ENCODE measurements at regions of chr17 and their contacts with region 1.

Region 1: GRCh38 chr17:62109378-62109902 is 44.4 kb upstream of the MED13 start:
- DNase-seq: peak; percentile 86
- H3K4me3 ChIP-seq: no peak overlapping the region
- H3K27ac ChIP-seq: no peak overlapping the region
- H3K4me1 ChIP-seq: peaks cover 6% of the 10 kb centered on the region
- H3K27me3 ChIP-seq: no peaks in the 10 kb centered on the region
- CTCF ChIP-seq: peak; percentile 85

Region 2: DNA sequence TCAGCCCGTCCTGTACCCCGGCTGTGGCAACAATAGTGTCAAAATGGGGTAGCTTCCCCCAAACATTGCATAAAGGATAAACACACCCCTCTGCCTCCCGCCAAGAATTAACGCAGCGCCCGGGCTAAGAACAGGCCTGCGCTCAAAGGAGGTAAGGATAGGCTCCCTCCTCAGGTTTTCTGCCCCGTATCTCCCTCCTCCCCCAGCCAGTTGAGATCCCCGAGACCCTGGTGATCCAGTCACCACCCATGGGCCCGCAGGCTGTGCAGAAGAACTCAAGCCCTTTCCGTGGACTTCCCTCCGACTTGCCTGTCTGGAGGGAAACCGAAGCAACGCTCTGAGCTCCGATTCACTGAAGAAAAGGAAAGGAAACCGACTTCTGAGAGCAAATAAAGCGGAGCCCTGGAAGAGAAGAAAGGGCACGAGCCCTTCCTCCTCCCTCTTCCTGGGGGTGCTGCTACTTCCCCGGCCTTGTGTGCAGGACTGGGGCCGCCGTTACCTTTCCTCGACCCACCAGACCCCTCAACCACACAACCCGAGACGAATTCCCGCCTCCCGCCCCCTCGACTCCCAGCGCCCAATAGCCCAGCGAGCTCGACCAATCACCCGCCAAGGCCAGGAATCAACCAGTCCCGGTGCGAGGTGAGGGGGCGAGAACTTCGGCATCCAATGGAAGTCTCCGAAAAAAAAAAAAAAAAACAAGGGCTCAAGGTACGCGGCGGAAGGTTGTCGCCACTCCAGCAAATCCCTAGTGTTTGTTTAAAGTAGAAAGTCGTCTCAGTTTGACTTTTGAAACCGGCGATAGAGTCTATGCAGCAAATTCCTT is 246.3 kb before region 1 on chr17 and contains the start of gene BRIP1:
- CTCF ChIA-PET with region 1: interaction called, 12 read pairs
- POLR2A ChIA-PET with region 1: no interaction called
- intact Hi-C with region 1: no loop called
- DNase-seq: peak; percentile 99
- H3K4me3 ChIP-seq: peak within 1 kb of the TSS; percentile 69
- H3K27ac ChIP-seq: peak within 1 kb of the TSS; percentile 92
- H3K4me1 ChIP-seq: peaks cover 15% of the 10 kb centered on the region
- H3K27me3 ChIP-seq: no peaks in the 10 kb centered on the region
- CTCF ChIP-seq: no peak
- total RNA-seq, gene BRIP1: 30.2 and 35.3 TPM in 2 replicates

Region 3: GRCh38 chr17:62065598-62066468 is 43.6 kb before region 1 on chr17:
- CTCF ChIA-PET with region 1: interaction called, 8 read pairs
- POLR2A ChIA-PET with region 1: no interaction called
- intact Hi-C with region 1: loop called (anchors 2 kb)
- DNase-seq: peak; percentile 99
- H3K4me3 ChIP-seq: peak overlapping the region; percentile 89
- H3K27ac ChIP-seq: peak overlapping the region; percentile 97
- H3K4me1 ChIP-seq: peaks cover 24% of the 10 kb centered on the region
- H3K27me3 ChIP-seq: no peaks in the 10 kb centered on the region
- CTCF ChIP-seq: peak; percentile 98

Region 4: GRCh38 chr17:62140836-62141235 is 31.4 kb after region 1 on chr17:
- CTCF ChIA-PET with region 1: interaction called, 4 read pairs
- POLR2A ChIA-PET with region 1: interaction called, 11 read pairs
- intact Hi-C with region 1: no loop called
- DNase-seq: no peak
- H3K4me3 ChIP-seq: no peak overlapping the region
- H3K27ac ChIP-seq: no peak overlapping the region
- H3K4me1 ChIP-seq: no peaks in the 10 kb centered on the region
- H3K27me3 ChIP-seq: no peaks in the 10 kb centered on the region
- CTCF ChIP-seq: no peak

Region 5: DNA sequence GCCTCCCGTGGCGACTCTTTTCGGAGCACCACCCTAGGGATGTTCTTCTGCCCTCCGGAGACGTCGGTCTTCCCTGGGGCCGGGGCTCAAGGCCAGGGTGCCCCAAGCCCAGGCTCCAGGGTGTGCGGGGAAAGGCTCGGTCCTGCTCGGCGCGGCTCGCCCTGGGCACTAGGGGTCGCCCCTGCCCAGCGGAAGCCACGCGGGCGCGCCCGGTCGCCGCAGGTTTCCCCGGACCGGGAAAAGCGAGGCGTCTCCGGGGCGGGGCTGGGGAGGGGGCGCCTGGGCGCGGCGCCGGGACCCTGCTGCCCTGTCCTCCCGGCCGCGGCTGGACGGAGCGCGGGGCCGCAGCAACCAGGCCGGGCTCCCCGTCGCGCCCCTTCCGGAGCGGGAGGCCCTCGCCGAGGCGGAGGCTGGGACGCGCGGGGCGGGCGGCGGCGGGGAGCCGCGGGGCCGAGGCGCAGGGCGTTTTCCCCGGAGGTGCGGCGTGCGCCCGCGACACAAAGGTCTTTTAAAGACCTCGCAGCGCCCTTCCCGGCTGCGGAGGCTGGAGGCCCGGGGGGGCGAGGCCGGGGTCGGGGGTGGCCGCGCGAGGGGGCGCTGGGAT is 594.4 kb after region 1 on chr17:
- CTCF ChIA-PET with region 1: no interaction called
- POLR2A ChIA-PET with region 1: no interaction called
- intact Hi-C with region 1: no loop called
- DNase-seq: peak; percentile 70
- H3K4me3 ChIP-seq: peak overlapping the region; percentile 62
- H3K27ac ChIP-seq: no peak overlapping the region
- H3K4me1 ChIP-seq: peaks cover 6% of the 10 kb centered on the region
- H3K27me3 ChIP-seq: no peaks in the 10 kb centered on the region
- CTCF ChIP-seq: peak; percentile 81

Measured in A673 (cell line).